MCF 10A (cell line): ENCODE measurements at regions of chr6 and their contacts with region 1.

Region 1: DNA sequence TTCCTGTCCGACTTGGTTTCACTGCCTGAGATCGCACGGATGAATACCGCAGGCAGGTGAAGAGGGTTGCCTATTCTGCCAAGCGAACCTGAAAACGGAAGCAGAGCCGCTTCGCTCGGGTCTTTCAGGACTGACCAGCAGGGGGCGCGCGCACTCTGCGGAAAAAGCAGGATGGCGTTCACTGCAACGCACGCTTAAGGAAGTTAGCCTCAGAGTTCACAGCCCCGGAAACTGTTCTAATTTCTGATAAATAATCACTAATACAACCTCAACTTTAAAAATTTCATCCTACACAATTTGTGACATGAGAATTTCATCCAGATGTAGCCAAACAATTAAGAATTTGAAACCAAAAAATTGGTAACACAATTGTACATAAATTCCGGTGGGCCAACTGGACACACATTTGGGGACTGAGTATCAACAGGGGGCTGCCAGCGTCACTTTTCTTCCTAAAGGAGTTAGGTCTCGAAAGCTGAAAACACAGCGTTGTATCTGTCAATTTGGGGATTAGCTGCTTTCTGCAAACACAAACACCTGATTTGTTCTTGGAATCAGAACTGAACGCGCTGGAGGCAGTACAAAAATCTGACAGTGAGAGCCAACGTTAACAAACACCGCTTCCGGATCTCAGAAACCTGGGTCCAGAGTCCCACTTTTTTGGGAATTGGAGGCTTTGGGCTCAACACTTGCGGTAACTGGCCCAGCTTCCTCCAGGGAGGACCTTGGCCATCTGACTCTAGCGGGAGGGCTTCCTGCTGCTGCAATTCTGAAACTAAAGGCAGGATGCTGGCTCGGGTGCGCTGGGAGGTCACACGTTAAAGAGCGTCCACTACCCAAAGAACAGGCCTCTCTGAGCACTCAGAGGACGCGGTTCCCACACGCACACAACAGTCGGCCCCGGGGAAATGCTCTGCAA is 8.8 kb downstream of the PXDC1 start:
- DNase-seq: peak; percentile 79
- H3K4me3 Mint-ChIP-seq: no peak overlapping the region
- H3K27ac Mint-ChIP-seq: peak overlapping the region; percentile 52
- H3K4me1 Mint-ChIP-seq: peaks cover 31% of the 10 kb centered on the region
- H3K27me3 Mint-ChIP-seq: no peaks in the 10 kb centered on the region
- CTCF ChIP-seq: peak; percentile 92

Region 2: DNA sequence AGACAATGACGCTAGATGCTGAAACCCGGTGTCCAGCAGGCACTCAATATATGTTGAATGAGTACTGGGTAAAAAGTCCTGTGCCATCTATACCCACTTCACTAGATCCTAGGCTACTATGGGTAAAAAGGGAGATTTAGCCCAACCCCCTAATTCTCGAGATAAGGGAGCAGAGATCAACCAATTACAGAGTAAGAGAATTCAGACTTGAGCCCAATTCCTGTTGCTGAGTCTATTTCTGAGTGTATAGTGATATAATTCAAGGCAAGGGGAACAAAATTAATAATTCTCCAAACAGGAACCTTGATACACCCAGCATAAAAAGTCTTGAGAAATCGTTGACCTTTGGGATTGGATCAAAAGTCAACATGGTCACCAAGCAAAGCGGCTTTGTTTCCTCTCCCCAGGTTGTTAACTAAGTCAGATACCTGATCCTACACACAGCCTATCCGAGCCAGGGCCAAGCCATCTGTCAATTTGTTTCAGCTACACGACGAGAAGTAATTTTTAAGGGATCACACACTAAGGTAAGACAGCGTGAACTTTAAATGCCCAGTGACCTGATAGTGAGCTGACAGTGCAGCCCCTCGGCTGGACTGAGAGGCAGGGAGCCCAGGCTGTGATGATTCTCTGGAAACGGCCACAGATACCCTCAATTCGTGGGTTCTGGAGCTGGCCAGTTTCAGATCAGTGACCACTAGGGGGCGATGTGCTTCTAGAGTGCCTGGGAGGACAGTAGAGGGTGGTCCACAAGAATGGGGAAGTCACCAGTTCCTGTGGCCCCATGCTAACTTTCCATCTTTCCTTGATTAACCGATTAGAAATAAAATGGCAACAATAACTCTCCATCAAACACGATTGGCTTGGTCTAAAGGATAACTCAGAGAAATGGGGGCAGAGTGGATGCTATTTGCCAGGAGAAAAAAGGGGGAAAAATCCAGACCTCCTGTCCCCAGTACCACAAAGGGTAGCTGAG is 332.0 kb before region 1 on chr6:
- CTCF ChIA-PET with region 1: no interaction called
- POLR2A ChIA-PET with region 1: no interaction called
- intact Hi-C with region 1: no loop called
- DNase-seq: peak; percentile 71
- H3K4me3 Mint-ChIP-seq: no peak overlapping the region
- H3K27ac Mint-ChIP-seq: no peak overlapping the region
- H3K4me1 Mint-ChIP-seq: peaks cover 13% of the 10 kb centered on the region
- H3K27me3 Mint-ChIP-seq: no peaks in the 10 kb centered on the region
- CTCF ChIP-seq: peak; percentile 64

Region 3: GRCh38 chr6:3644739-3645012 is 98.0 kb before region 1 on chr6:
- CTCF ChIA-PET with region 1: no interaction called
- POLR2A ChIA-PET with region 1: no interaction called
- intact Hi-C with region 1: no loop called
- DNase-seq: no peak
- H3K4me3 Mint-ChIP-seq: no peak overlapping the region
- H3K27ac Mint-ChIP-seq: no peak overlapping the region
- H3K4me1 Mint-ChIP-seq: peaks cover 7% of the 10 kb centered on the region
- H3K27me3 Mint-ChIP-seq: no peaks in the 10 kb centered on the region
- CTCF ChIP-seq: no peak

Region 4: DNA sequence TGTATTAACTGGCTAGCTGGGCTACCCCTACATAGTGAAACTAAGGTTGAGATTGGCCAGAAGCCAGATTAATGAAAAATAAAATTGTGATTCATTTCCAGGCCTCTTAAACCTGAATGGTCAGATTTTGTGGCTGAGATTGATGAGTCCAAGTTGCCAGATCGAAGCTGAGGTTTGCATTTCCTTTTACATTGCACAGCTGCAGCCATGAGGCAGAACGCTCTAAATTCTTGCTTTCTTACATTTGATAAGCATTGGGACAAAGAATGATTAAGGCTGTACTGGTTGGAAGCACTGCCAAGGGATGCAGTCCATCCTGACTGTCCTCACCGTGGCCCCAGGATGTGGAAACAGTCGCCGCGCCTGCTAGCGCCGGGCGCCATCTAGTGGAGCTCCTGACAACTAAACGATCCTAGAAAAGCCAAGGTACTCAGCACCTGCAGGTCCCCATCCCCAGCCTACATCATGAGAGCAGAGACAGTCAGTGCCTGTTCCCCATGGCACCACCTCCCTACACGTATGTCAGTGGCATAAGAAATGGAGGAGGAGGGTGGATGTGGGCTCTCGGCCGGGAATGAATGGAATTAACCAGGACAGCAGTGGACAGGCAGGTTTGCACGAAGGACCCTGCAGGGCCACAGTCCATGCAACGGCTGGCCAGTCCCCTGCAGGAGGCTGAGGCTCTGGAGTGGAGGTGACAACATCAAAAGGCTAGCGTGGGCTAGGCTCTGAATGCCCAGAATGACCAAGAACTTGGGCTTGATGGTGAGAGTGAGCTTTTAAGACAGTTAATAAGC is 10.1 kb before region 1 on chr6:
- CTCF ChIA-PET with region 1: interaction called, 11 read pairs
- POLR2A ChIA-PET with region 1: no interaction called
- intact Hi-C with region 1: no loop called
- DNase-seq: peak; percentile 80
- H3K4me3 Mint-ChIP-seq: no peak overlapping the region
- H3K27ac Mint-ChIP-seq: no peak overlapping the region
- H3K4me1 Mint-ChIP-seq: peaks cover 9% of the 10 kb centered on the region
- H3K27me3 Mint-ChIP-seq: no peaks in the 10 kb centered on the region
- CTCF ChIP-seq: peak; percentile 94

Region 5: DNA sequence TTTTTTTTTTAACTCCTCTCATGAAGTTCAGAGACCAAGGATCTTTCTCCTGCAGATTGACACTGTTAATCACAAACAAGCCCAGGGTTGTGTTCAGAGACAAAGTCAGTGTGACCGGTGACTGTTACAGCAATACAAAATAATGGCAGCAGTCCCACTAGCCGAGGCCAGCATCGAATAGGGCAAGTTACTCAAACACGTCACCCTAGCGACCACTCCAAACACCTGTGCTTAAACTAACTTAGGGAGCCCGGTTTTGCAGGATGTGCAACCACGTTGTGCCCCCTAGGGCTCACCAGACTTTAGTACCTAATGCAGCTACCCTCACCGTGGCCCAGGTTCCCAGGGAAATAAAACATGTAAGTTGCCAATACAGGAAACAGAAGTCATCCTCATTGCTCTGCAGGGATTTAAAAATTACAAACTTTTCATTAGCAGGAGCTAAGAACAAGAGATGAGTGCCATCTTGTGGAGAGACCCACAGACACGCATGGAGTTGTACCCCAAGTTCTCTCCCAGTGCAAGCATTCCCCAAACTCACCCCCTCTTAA is 144.5 kb after region 1 on chr6:
- CTCF ChIA-PET with region 1: interaction called, 16 read pairs
- POLR2A ChIA-PET with region 1: no interaction called
- intact Hi-C with region 1: loop called (anchors 1 kb)
- DNase-seq: no peak
- H3K4me3 Mint-ChIP-seq: no peak overlapping the region
- H3K27ac Mint-ChIP-seq: no peak overlapping the region
- H3K4me1 Mint-ChIP-seq: peaks cover 10% of the 10 kb centered on the region
- H3K27me3 Mint-ChIP-seq: no peaks in the 10 kb centered on the region
- CTCF ChIP-seq: peak; percentile 20

Region 6: GRCh38 chr6:3977875-3978711 is 235.4 kb after region 1 on chr6:
- CTCF ChIA-PET with region 1: interaction called, 14 read pairs
- POLR2A ChIA-PET with region 1: interaction called, 4 read pairs
- intact Hi-C with region 1: loop called (anchors 2 kb)
- DNase-seq: peak; percentile 69
- H3K4me3 Mint-ChIP-seq: no peak overlapping the region
- H3K27ac Mint-ChIP-seq: no peak overlapping the region
- H3K4me1 Mint-ChIP-seq: no peaks in the 10 kb centered on the region
- H3K27me3 Mint-ChIP-seq: no peaks in the 10 kb centered on the region
- CTCF ChIP-seq: peak; percentile 43

Region 7: GRCh38 chr6:3990692-3991501 is 248.2 kb after region 1 on chr6:
- CTCF ChIA-PET with region 1: interaction called, 4 read pairs
- POLR2A ChIA-PET with region 1: interaction called, 7 read pairs
- intact Hi-C with region 1: loop called (anchors 1 kb)
- DNase-seq: peak; percentile 87
- H3K4me3 Mint-ChIP-seq: peak overlapping the region; percentile 62
- H3K27ac Mint-ChIP-seq: peak overlapping the region; percentile 43
- H3K4me1 Mint-ChIP-seq: peaks cover 16% of the 10 kb centered on the region
- H3K27me3 Mint-ChIP-seq: no peaks in the 10 kb centered on the region
- CTCF ChIP-seq: peak; percentile 77

Region 8: GRCh38 chr6:4008324-4009047 is 265.8 kb after region 1 on chr6:
- CTCF ChIA-PET with region 1: interaction called, 12 read pairs
- POLR2A ChIA-PET with region 1: interaction called, 4 read pairs
- intact Hi-C with region 1: loop called (anchors 1 kb)
- DNase-seq: peak; percentile 79
- H3K4me3 Mint-ChIP-seq: no peak overlapping the region
- H3K27ac Mint-ChIP-seq: no peak overlapping the region
- H3K4me1 Mint-ChIP-seq: peaks cover 17% of the 10 kb centered on the region
- H3K27me3 Mint-ChIP-seq: no peaks in the 10 kb centered on the region
- CTCF ChIP-seq: peak; percentile 55